OCI-LY7 (cell line): ENCODE measurements at regions of chr2 and their contacts with region 1.

Region 1: GRCh38 chr2:197356136-197356535 is 45.6 kb upstream of the ANKRD44 start:
- DNase-seq: peak; percentile 42
- H3K4me3 ChIP-seq: no peak overlapping the region
- H3K27ac ChIP-seq: no peak overlapping the region
- H3K4me1 ChIP-seq: no peaks in the 10 kb centered on the region
- CTCF ChIP-seq: peak; percentile 70

Region 2: GRCh38 chr2:197191177-197191939 is 164.8 kb before region 1 on chr2:
- CTCF ChIA-PET with region 1: no interaction called
- POLR2A ChIA-PET with region 1: interaction called, 3 read pairs
- intact Hi-C with region 1: loop called (anchors 5 kb)
- DNase-seq: peak; percentile 83
- H3K4me3 ChIP-seq: no peak overlapping the region
- H3K27ac ChIP-seq: no peak overlapping the region
- H3K4me1 ChIP-seq: peaks cover 33% of the 10 kb centered on the region
- CTCF ChIP-seq: peak; percentile 99

Region 3: GRCh38 chr2:197209742-197210408 is 146.3 kb before region 1 on chr2:
- CTCF ChIA-PET with region 1: no interaction called
- POLR2A ChIA-PET with region 1: no interaction called
- intact Hi-C with region 1: no loop called
- DNase-seq: peak; percentile 78
- H3K4me3 ChIP-seq: peak overlapping the region; percentile 45
- H3K27ac ChIP-seq: peak overlapping the region; percentile 96
- H3K4me1 ChIP-seq: peaks cover 100% of the 10 kb centered on the region
- CTCF ChIP-seq: no peak

Region 4: DNA sequence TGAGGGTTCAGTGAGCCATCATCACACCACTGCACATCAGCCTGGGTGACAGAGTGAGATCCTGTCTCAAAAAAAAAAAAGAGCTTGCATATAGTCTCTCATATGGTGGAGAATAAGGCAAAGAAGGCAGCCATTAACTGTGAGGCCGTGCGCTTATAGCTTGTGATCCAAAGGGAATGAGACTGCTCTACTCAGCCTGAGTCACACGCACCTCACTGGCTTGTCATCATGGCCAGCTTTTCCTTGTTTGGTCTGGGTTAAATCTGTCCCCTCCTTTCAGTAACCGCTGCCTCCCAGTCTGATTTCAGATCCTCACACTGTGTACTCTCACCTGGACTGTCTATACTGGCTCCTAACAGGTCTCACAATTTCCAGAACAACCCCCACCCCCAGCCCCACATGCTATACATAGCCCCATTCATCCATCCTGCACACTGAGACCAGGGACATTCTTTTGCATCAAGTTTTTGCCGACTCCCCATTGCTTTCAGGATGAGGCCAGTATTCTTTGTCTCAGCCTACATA is 10.2 kb before region 1 on chr2:
- CTCF ChIA-PET with region 1: no interaction called
- POLR2A ChIA-PET with region 1: interaction called, 12 read pairs
- intact Hi-C with region 1: no loop called
- DNase-seq: no peak
- H3K4me3 ChIP-seq: no peak overlapping the region
- H3K27ac ChIP-seq: no peak overlapping the region
- H3K4me1 ChIP-seq: no peaks in the 10 kb centered on the region
- CTCF ChIP-seq: no peak